Psoas muscle (tissue), 8 donors: ENCODE measurements at regions of chr9 and their contacts with region 1.

Region 1: GRCh38 chr9:17531642-17532254 is 47.1 kb upstream of the SH3GL2 start:
- DNase-seq: no peak
- ATAC-seq: no peak
- H3K4me3 ChIP-seq: no peak overlapping the region
- H3K27ac ChIP-seq: no peak overlapping the region
- H3K4me1 ChIP-seq: no peaks in the 10 kb centered on the region
- H3K27me3 ChIP-seq: peaks cover 0 to 2% (median 0%) of the 10 kb centered on the region in 3 donors
- CTCF ChIP-seq: peak; percentile 42

Region 2: GRCh38 chr9:17802249-17802857 is 270.6 kb after region 1 on chr9:
- intact Hi-C with region 1: loop called in 1 of 2 experiments (anchors 5 kb)
- DNase-seq: no peak
- ATAC-seq: no peak
- H3K4me3 ChIP-seq: no peak overlapping the region
- H3K27ac ChIP-seq: no peak overlapping the region
- H3K4me1 ChIP-seq: no peaks in the 10 kb centered on the region
- H3K27me3 ChIP-seq: no peaks in the 10 kb centered on the region
- CTCF ChIP-seq: no peak

Region 3: GRCh38 chr9:18208154-18209059 is 676.7 kb after region 1 on chr9:
- intact Hi-C with region 1: loop called (anchors 5 to 10 kb)
- DNase-seq: peak in 1 of 2 donors; percentile 12
- ATAC-seq: no peak
- H3K4me3 ChIP-seq: no peak overlapping the region
- H3K27ac ChIP-seq: no peak overlapping the region
- H3K4me1 ChIP-seq: no peaks in the 10 kb centered on the region
- H3K27me3 ChIP-seq: no peaks in the 10 kb centered on the region
- CTCF ChIP-seq: no peak

Region 4: GRCh38 chr9:18215626-18216025 is 683.9 kb after region 1 on chr9:
- intact Hi-C with region 1: loop called (anchors 5 to 10 kb)
- DNase-seq: no peak
- ATAC-seq: no peak
- H3K4me3 ChIP-seq: no peak overlapping the region
- H3K27ac ChIP-seq: no peak overlapping the region
- H3K4me1 ChIP-seq: no peaks in the 10 kb centered on the region
- H3K27me3 ChIP-seq: no peaks in the 10 kb centered on the region
- CTCF ChIP-seq: no peak